ENCODE measurements at regions of chr7 and their contacts with region 1.

Region 1: GRCh38 chr7:49631071-49631815 is 142.2 kb upstream of the VWC2 start:
- DNase-seq: no peak
- ATAC-seq: peak; percentile 60 to 65

Region 2: GRCh38 chr7:49783446-49783845 is 152.2 kb after region 1 on chr7:
- intact Hi-C with region 1: loop called in 1 of 2 experiments (anchors 5 kb)
- DNase-seq: peak; percentile 61
- ATAC-seq: peak; percentile 92 to 95

Measured in left cardiac atrium (tissue), 4 donors.